ENCODE measurements at regions of chr5 and their contacts with region 1.

Region 1: GRCh38 chr5:132180134-132180745 is 47.4 kb downstream of the P4HA2 start:
- DNase-seq: peak; percentile 63
- H3K4me3 ChIP-seq: no peak overlapping the region
- H3K27ac ChIP-seq: no peak overlapping the region
- H3K4me1 ChIP-seq: peaks cover 22% of the 10 kb centered on the region
- H3K27me3 ChIP-seq: no peaks in the 10 kb centered on the region
- CTCF ChIP-seq: peak; percentile 79 to 87

Region 2: DNA sequence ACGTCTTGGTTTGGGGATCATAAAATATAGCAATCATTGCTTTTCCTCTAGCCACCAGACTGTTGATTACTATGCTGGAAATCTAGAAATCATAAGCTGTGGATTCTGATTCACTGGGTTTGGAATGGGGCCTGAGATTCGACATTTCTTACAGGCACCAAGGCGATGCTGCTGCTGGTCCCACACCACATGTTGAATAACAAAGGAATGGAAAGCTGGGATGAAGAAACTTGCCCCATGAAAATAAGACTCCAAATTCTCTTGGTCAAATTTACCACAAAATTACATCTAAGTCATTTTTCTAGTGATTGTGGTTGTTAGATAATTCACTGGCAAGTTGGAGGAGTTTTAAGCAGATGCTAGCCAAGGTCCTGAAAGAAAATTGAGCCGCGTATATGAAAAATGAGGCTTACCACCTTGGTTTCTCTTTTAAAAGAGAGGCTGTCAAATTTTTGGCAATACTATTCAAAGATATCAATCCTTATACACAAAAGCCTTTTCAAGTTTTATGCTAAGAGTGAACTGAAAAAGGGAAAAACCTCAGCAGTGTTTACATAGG is 211.8 kb before region 1 on chr5:
- CTCF ChIA-PET with region 1: no interaction called
- dilution Hi-C with region 1: no loop called
- in situ Hi-C with region 1: no loop called
- intact Hi-C with region 1: no loop called
- DNase-seq: no peak
- H3K4me3 ChIP-seq: no peak overlapping the region
- H3K27ac ChIP-seq: no peak overlapping the region
- H3K4me1 ChIP-seq: no peaks in the 10 kb centered on the region
- H3K27me3 ChIP-seq: no peaks in the 10 kb centered on the region
- CTCF ChIP-seq: no peak

Region 3: DNA sequence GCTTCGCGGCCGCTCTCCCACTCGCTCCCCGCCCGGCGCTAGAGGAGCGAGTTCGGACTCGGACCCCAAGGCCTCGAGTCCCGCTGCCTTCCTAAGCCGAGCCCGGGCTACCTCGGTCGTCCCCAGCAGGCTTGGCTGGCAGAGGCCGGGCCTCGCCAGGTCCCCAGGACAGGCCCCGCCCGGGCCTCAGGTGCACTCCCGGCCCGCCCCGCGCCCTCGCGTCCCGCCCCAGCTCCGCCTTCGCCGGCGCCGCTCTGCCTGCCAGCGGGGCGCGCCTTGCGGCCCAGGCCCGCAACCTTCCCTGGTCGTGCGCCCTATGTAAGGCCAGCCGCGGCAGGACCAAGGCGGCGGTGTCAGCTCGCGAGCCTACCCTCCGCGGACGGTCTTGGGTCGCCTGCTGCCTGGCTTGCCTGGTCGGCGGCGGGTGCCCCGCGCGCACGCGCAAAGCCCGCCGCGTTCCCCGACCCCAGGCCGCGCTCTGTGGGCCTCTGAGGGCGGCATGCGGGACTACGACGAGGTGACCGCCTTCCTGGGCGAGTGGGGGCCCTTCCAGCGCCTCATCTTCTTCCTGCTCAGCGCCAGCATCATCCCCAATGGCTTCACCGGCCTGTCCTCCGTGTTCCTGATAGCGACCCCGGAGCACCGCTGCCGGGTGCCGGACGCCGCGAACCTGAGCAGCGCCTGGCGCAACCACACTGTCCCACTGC is 189.4 kb after region 1 on chr5 and contains the start of gene SLC22A5:
- CTCF ChIA-PET with region 1: no interaction called
- dilution Hi-C with region 1: no loop called
- in situ Hi-C with region 1: no loop called
- intact Hi-C with region 1: loop called (anchors 5 kb)
- DNase-seq: peak; percentile 78
- H3K4me3 ChIP-seq: peak within 1 kb of the TSS; percentile 68 to 91 (median 85)
- H3K27ac ChIP-seq: peak within 1 kb of the TSS; percentile 94
- H3K4me1 ChIP-seq: peaks cover 38% of the 10 kb centered on the region
- H3K27me3 ChIP-seq: no peaks in the 10 kb centered on the region
- CTCF ChIP-seq: no peak
- total RNA-seq, gene SLC22A5: 11.5 to 13.8 TPM

Region 4: DNA sequence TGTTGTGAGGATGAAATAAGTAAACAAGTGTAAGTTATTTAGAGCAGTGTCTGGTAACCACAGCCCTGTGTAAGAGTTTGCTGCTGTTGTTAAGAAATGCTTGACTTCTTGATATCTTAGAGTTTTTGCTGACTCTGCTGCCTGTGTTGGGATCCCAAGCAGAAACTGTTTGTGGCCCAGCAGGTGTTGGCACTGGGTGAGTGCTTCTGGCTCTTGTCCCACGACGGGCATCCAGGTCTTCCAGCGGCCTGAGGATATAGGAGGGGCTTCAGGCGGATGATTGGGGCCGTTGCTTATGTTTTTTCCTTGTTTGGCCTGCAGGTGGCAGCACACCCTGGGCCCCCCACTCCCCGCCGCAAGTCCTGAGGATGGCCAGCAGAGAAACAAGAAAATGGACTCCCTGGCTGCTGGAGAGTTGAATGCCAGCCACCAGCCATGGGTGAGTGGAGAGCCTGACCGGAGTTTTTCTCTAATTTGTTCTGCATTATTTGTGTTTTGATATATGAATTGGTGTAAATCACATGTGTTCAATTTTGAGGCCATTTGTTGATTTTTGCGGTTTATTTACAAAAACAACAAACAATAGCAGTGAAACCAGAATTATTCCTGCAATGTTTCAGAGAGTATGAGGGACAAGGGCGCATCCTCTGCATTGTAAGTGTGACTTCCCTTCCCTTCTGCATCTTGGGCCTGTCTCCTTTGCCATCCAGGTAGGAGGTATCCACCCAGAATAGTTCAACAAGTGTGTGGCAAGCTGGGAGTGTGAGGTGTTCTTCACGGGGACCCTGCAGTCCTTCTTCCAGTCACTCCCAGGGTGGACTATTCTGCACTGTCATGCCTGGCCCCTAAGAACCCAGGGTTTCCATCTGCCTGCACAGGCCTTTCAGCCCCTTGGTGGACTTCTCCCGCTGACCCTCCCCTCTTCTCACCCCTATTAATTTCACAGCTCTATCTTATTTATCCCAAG is 239.5 kb after region 1 on chr5:
- CTCF ChIA-PET with region 1: no interaction called
- dilution Hi-C with region 1: no loop called
- in situ Hi-C with region 1: no loop called
- intact Hi-C with region 1: loop called (anchors 2 kb)
- DNase-seq: peak; percentile 48
- H3K4me3 ChIP-seq: no peak overlapping the region
- H3K27ac ChIP-seq: no peak overlapping the region
- H3K4me1 ChIP-seq: peaks cover 51% of the 10 kb centered on the region
- H3K27me3 ChIP-seq: no peaks in the 10 kb centered on the region
- CTCF ChIP-seq: peak; percentile 45 to 82